Activated CD8-positive, alpha-beta memory T cell treated with anti-CD3 and anti-CD28 coated beads, Interleukin-2, amount 10 ng/mL, durations not matched to agents 7 days and 5 days (primary cell): ENCODE measurements at regions of chr20 and their contacts with region 1.

Region 1: GRCh38 chr20:37081717-37082289 is 14.0 kb downstream of the RBL1 start:
- DNase-seq: no peak
- ATAC-seq: no peak
- H3K4me3 Mint-ChIP-seq: no peak overlapping the region
- H3K27ac Mint-ChIP-seq: no peak overlapping the region
- H3K4me1 Mint-ChIP-seq: peaks cover 25% of the 10 kb centered on the region
- H3K27me3 Mint-ChIP-seq: no peaks in the 10 kb centered on the region

Region 2: DNA sequence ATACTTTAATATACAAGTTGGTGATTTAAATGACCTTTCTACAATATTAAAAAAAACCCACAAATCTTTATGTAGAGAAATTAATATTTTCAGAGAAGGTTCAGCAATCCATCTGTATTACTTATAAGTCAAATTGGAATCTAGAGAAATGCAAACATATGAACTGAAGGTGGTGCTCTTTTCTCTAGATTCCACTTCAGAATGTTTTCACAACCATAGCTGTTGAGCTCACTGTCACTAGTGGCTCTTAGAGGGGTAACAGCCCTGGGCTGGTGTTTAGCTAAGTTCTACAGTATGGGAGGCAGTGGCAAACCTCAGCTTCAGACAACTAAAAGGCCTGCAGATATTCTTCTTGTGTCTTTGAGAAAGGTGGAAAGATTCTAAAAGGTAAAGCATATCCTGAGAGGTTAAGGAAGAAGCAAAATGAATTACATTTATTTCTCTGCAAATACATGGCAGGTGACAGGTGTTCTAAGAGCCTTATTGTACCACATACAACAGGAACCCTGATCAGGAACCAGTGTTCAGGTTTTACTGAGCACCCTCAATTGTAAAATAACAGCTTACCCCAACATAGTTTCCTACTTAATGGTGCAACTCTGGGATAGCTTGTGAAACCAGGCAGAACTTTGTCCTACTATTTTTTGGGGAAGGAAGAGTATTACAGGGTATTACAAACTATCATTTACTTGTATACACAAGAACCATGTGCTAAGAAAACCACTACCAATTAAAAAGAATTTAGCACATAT is 73.7 kb before region 1 on chr20:
- CTCF ChIA-PET with region 1: interaction called, 10 read pairs
- DNase-seq: no peak
- ATAC-seq: peak; percentile 90
- H3K4me3 Mint-ChIP-seq: no peak overlapping the region
- H3K27ac Mint-ChIP-seq: peak overlapping the region; percentile 63
- H3K4me1 Mint-ChIP-seq: peaks cover 18% of the 10 kb centered on the region
- H3K27me3 Mint-ChIP-seq: no peaks in the 10 kb centered on the region